PC-3 (cell line): ENCODE measurements at regions of chr17 and their contacts with region 1.

Region 1: DNA sequence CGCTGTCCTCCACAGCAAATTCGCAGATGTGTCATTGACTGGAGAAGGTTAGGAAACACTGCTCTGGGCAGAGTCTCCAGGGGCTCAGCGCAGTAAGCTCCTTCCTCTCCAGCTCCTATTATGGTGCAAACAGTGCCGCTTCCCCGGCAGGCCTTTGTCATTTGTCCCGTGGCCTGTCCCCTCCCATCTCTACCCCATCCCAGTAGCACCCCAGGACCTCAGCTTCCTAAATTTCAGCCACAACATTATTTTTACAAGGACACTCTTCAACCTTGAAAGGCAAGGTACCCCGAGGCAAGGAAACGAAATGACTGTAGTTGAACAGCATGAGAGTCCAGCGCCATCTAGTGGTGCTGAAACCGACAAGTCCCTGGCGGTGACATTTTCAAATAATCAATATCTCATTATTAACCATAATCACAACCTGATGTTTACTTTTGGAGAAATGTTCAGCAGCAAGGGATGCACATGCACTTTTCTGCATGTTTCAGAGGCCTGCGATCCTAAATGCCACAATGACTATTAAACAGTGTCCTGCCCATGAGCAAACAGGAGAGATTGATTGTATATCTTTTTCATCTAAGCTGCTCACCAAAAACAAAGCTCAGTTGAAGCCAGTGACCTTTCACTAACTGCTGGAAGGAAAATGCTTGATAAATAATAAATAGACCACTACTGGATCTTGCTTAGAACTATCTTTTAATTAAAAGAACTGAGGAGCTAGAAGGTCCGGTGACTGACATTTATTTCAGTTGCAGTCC is 16.5 kb downstream of the MRPS23 start:
- DNase-seq: peak; percentile 80
- ATAC-seq: peak; percentile 32
- H3K4me3 ChIP-seq: no peak overlapping the region; the same call in 1 of the 2 replicates
- H3K27ac ChIP-seq: no peak overlapping the region
- H3K4me1 ChIP-seq: peaks cover 27% of the 10 kb centered on the region
- H3K27me3 ChIP-seq: no peaks in the 10 kb centered on the region
- CTCF ChIP-seq: peak; percentile 99

Region 2: GRCh38 chr17:57662644-57663308 is 170.6 kb before region 1 on chr17:
- CTCF ChIA-PET with region 1: no interaction called
- POLR2A ChIA-PET with region 1: no interaction called
- intact Hi-C with region 1: loop called (anchors 1 kb)
- DNase-seq: peak; percentile 100
- ATAC-seq: peak; percentile 98
- H3K4me3 ChIP-seq: peak overlapping the region; percentile 44
- H3K27ac ChIP-seq: peak overlapping the region; percentile 83
- H3K4me1 ChIP-seq: peaks cover 20% of the 10 kb centered on the region
- H3K27me3 ChIP-seq: no peaks in the 10 kb centered on the region
- CTCF ChIP-seq: peak; percentile 24; the same call in 1 of the 2 replicates

Region 3: DNA sequence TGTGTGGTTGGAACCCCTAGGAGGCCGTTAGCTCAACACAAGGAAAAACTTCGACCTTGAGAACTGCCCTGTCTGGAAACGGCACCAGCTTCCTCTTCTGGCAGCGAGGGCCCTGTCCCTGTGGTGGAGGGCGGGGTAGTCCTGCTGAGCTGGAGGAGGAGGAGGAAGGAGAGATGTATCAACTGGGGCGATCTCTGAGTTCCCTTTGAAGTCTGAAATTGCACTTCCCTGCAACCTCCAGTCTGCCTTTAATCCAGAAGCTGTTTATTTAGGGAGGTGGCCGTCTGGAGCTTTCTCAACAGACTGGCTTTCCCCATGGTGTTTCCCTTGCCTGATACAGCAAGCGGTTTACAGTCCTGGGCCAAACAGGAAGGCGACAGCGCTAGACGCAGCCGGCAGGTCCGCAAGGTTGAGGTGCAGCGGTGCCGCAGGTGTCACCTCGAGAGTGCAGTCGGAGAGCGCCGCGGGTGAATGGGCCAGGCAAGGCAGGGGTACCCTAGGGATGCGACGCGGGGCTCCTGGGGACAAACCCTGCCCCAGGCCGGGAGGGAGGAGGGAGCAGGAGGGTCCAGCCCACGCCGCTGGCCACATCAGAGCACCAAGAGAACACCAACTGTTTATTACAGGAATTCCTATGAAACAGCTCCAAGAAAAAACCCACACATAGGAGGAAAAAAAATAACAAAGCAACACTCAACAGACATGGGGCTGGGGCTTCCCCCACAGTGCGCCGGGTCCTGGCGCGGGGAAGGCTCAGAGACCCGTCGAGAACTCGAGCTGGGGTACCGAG is 27.8 kb after region 1 on chr17:
- CTCF ChIA-PET with region 1: no interaction called
- POLR2A ChIA-PET with region 1: interaction called, 16 read pairs
- intact Hi-C with region 1: no loop called
- DNase-seq: peak; percentile 50
- ATAC-seq: peak; percentile 30
- H3K4me3 ChIP-seq: peak overlapping the region; percentile 63
- H3K27ac ChIP-seq: peak overlapping the region; percentile 8
- H3K4me1 ChIP-seq: peaks cover 27% of the 10 kb centered on the region
- H3K27me3 ChIP-seq: no peaks in the 10 kb centered on the region
- CTCF ChIP-seq: no peak

Region 4: GRCh38 chr17:58112970-58113631 is 279.7 kb after region 1 on chr17:
- CTCF ChIA-PET with region 1: no interaction called
- POLR2A ChIA-PET with region 1: no interaction called
- intact Hi-C with region 1: loop called (anchors 2 kb)
- DNase-seq: peak; percentile 93
- ATAC-seq: peak; percentile 86
- H3K4me3 ChIP-seq: no peak overlapping the region
- H3K27ac ChIP-seq: no peak overlapping the region
- H3K4me1 ChIP-seq: no peaks in the 10 kb centered on the region
- H3K27me3 ChIP-seq: no peaks in the 10 kb centered on the region; the same call in 1 of the 2 replicates
- CTCF ChIP-seq: peak; percentile 98